CD4-positive, alpha-beta T cell (primary cell): ENCODE measurements at regions of chrX and their contacts with region 1.

Region 1: GRCh38 chrX:72276478-72276953 is 532 bp downstream of the RPS4X start:
- DNase-seq: no peak
- ATAC-seq: no peak
- H3K4me3 ChIP-seq: peak overlapping the region; percentile 95
- H3K4me3 Mint-ChIP-seq: peak overlapping the region; percentile 96
- H3K27ac ChIP-seq: peak overlapping the region; percentile 64 to 80
- H3K27ac Mint-ChIP-seq: peak overlapping the region; percentile 93
- H3K4me1 ChIP-seq: peaks cover 26% of the 10 kb centered on the region
- H3K4me1 Mint-ChIP-seq: peaks cover 42% of the 10 kb centered on the region
- H3K27me3 ChIP-seq: no peaks in the 10 kb centered on the region
- H3K27me3 Mint-ChIP-seq: peaks cover 5% of the 10 kb centered on the region
- CTCF ChIP-seq: no peak

Region 2: GRCh38 chrX:72238721-72239475 is 37.6 kb before region 1 on chrX and contains the start of gene ERCC6L:
- CTCF ChIA-PET with region 1: interaction called, 8 read pairs
- POLR2A ChIA-PET with region 1: interaction called, 19 read pairs
- intact Hi-C with region 1: loop called in 1 of 2 experiments (anchors 5 kb)
- DNase-seq: peak; percentile 68 to 92 (median 78)
- ATAC-seq: peak; percentile 99
- H3K4me3 ChIP-seq: peak within 1 kb of the TSS; percentile 61
- H3K4me3 Mint-ChIP-seq: peak within 1 kb of the TSS; percentile 76
- H3K27ac ChIP-seq: no peak within 1 kb of the TSS
- H3K27ac Mint-ChIP-seq: peak within 1 kb of the TSS; percentile 49
- H3K4me1 ChIP-seq: peaks cover 8% of the 10 kb centered on the region
- H3K4me1 Mint-ChIP-seq: no peaks in the 10 kb centered on the region
- H3K27me3 ChIP-seq: no peaks in the 10 kb centered on the region
- H3K27me3 Mint-ChIP-seq: no peaks in the 10 kb centered on the region
- CTCF ChIP-seq: no peak
- total RNA-seq, gene ERCC6L: 0.08 TPM in 1 of 2 experiments, not detected in the other

Region 3: GRCh38 chrX:72245461-72246089 is 30.9 kb before region 1 on chrX:
- CTCF ChIA-PET with region 1: interaction called, 16 read pairs
- POLR2A ChIA-PET with region 1: interaction called, 7 read pairs
- intact Hi-C with region 1: loop called in 1 of 2 experiments (anchors 5 kb)
- DNase-seq: peak in 12 of 14 experiments; percentile 4 to 64 (median 28)
- ATAC-seq: no peak
- H3K4me3 ChIP-seq: no peak overlapping the region
- H3K4me3 Mint-ChIP-seq: no peak overlapping the region
- H3K27ac ChIP-seq: no peak overlapping the region
- H3K27ac Mint-ChIP-seq: no peak overlapping the region
- H3K4me1 ChIP-seq: no peaks in the 10 kb centered on the region
- H3K4me1 Mint-ChIP-seq: no peaks in the 10 kb centered on the region
- H3K27me3 ChIP-seq: no peaks in the 10 kb centered on the region
- H3K27me3 Mint-ChIP-seq: peaks cover 3% of the 10 kb centered on the region
- CTCF ChIP-seq: peak; percentile 69

Region 4: DNA sequence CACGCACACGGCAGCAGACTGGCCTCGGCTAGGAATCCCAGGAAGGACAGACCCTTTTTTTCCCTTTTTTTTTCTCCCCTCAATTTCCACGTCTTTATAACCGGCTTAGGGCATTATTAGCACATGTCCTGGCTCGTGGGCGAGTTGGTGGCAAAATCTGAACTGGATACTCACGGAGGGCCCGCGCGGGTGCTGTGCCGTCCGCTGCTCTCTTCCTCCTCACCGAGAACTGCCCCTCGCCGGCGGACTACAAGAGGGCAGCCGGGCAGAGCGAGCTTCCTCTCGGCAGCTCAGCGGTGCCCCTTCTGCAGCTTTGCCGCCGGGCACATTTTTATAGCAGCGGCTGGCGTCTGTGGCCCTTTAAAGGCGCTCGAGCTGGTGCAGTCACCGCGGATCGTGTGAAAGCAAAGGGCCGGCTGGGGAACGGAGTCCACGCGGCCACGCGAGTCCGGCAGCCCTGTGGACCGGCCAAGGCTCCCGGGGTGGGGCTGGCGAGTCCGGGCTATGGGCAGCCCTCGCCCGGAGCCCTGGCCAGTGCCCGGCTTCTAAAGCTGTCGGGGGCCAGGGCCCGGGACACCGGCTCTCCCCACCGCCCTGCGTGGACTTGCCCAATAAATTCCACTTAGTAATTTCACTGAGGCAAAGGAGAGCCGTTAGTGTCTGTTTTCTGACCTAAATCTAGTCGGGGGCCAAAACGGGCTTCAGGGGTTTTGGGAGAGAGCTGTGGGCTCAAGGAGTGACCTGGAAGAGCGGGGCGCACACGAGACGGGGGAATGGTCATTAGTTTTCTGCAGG is 30.5 kb after region 1 on chrX:
- CTCF ChIA-PET with region 1: interaction called, 3 read pairs
- POLR2A ChIA-PET with region 1: interaction called, 18 read pairs
- intact Hi-C with region 1: no loop called
- DNase-seq: peak in 5 of 14 experiments; percentile 34 to 52 (median 42)
- ATAC-seq: peak; percentile 38
- H3K4me3 ChIP-seq: peak overlapping the region; percentile 53
- H3K4me3 Mint-ChIP-seq: peak overlapping the region; percentile 88
- H3K27ac ChIP-seq: no peak overlapping the region
- H3K27ac Mint-ChIP-seq: no peak overlapping the region
- H3K4me1 ChIP-seq: peaks cover 41% of the 10 kb centered on the region
- H3K4me1 Mint-ChIP-seq: peaks cover 21% of the 10 kb centered on the region
- H3K27me3 ChIP-seq: peaks cover 37 to 68% of the 10 kb centered on the region in 2 experiments
- H3K27me3 Mint-ChIP-seq: peaks cover 75% of the 10 kb centered on the region
- CTCF ChIP-seq: no peak

Region 5: DNA sequence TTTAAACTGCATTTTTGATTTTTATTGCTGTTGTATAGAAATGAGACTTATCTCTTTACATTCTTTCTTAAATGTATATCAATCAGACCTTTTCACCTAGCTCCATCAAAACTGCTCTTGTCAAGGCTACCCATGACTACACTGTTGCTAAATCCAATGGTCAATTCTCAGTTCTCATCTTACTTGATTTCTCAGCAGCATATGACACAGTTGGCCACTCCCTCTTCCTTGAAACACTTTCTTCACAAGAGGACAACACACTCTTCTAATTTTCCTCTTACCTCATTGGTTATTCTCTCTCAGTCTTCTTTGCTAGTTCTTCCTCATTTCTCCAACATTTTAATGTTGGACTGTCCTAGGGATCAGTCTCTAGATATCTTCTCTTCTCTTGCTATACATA is 123.3 kb after region 1 on chrX:
- CTCF ChIA-PET with region 1: no interaction called
- POLR2A ChIA-PET with region 1: no interaction called
- intact Hi-C with region 1: no loop called
- DNase-seq: no peak
- ATAC-seq: no peak
- H3K4me3 ChIP-seq: no peak overlapping the region
- H3K4me3 Mint-ChIP-seq: no peak overlapping the region
- H3K27ac ChIP-seq: no peak overlapping the region
- H3K27ac Mint-ChIP-seq: no peak overlapping the region
- H3K4me1 ChIP-seq: no peaks in the 10 kb centered on the region
- H3K4me1 Mint-ChIP-seq: no peaks in the 10 kb centered on the region
- H3K27me3 ChIP-seq: no peaks in the 10 kb centered on the region
- H3K27me3 Mint-ChIP-seq: no peaks in the 10 kb centered on the region
- CTCF ChIP-seq: no peak